ENCODE measurements at regions of chr18 and their contacts with region 1.

Region 1: DNA sequence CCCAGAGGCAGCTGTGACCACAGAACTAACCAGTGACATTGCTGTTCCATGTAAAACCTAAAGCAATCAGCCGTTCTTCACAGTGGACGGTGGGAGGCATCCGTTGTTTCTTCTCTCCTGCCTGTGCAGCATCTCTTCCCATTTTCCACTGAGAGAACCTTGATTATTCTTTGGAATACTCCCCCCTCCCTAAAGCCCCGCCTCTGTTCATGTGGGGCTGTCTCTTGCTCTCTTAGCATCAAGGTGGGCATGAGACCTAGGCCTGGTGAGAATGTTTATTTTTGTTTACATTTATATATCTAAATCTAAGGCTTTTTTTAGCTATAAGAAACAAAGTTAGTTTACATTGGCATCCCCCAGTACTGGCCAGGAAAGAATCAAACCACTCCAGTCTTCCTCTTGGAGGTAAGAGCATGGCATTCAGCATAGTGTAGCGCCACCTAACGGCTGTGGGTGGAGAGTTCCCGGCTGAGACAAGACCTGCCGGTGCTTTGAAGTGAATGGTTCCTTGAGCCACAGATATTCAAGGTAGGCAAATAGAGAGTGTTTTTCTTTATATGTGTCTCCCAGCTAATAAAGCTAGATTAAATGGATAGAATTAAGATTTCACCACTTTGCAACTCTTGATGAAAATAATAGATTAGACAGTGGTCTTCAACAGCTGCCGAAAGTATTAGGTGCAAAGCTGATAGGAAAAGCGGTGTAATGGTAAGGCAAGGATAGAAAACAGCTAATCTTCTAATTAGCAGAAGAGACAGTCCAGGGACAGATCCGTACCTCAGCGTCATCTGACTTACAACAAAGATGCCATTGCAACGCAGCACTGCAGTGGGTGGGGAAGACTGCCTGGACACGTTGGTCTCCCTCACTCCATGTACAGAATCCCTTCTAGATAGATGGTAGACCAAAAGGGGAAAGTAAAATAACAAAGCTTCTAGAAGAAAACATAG is 219.6 kb upstream of the RAB12 start:
- DNase-seq: no peak
- ATAC-seq: peak; percentile 83
- H3K4me3 ChIP-seq: no peak overlapping the region
- H3K27ac ChIP-seq: no peak overlapping the region
- H3K4me1 ChIP-seq: no peaks in the 10 kb centered on the region
- H3K27me3 ChIP-seq: no peaks in the 10 kb centered on the region
- CTCF ChIP-seq: peak; percentile 62 to 71 (median 66)
- EP300 ChIP-seq: no peak
- POLR2A ChIP-seq: no peak
- RAD21 ChIP-seq: peak; percentile 60

Region 2: DNA sequence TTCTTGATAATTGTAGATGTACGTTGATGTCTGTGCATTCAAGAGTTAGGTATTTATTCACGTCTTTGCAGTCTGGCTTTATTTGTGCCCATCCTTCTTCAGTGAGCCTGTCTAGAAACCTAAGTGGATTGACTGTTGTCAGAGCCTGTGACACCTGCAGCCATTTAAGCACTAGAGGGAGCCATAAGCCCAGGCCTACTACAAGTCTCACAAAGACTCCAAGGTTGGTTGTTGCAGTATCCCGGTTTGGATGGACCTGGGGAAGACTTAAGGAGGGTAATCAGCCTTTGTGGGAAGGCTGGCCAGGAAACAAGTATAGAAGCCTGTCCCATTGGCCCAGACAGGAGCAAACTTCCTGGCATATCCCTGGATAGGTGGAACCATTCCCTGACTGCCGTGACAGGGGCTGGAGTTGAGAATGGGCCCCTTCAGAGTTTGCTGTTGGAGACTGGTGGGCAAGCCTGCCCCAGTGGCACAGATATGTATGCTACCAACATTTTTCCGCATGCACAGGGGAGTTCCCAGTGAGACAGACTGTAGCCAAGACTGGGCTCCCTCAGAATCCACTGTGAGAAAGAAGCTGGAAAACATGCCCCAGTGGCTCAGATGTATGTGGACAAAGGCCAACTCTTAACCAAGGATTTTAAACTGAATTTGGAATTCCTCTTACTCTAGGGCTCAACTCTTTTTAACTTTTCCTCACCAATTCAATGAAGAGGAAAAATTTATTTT is 1168.1 kb before region 1 on chr18:
- CTCF ChIA-PET with region 1: interaction called, 6 read pairs
- POLR2A ChIA-PET with region 1: no interaction called
- RAD21 ChIA-PET with region 1: no interaction called
- SMC1A ChIA-PET with region 1: interaction called, 4 read pairs
- in situ Hi-C with region 1: loop called (anchors 25 kb)
- intact Hi-C with region 1: loop called (anchors 1 kb)
- DNase-seq: peak; percentile 4
- ATAC-seq: peak; percentile 89
- H3K4me3 ChIP-seq: no peak overlapping the region
- H3K27ac ChIP-seq: no peak overlapping the region
- H3K4me1 ChIP-seq: no peaks in the 10 kb centered on the region
- H3K27me3 ChIP-seq: no peaks in the 10 kb centered on the region
- CTCF ChIP-seq: peak; percentile 58 to 80 (median 73)
- EP300 ChIP-seq: no peak
- POLR2A ChIP-seq: no peak
- RAD21 ChIP-seq: peak; percentile 66

Region 3: DNA sequence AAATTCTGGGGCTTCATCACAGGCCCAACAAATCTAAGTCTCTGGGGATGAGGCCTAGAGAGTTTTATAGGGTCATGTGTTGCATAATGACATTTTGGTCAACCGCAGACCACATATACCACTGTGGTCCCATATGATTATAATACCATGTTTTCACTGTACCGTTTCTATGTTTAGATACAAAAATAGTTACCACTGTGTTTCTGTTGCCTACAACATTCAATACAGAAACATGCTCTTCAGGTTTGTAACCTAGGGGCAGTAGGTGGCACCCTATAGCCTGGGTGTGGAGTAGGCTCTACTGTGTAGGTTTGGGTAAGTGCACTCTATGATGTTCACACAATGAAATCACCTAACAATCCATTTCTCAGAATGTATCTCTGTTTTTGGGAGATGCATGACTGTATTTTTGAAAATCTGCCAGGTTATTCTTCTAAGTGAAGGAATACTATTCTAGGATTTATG is 337.4 kb before region 1 on chr18:
- CTCF ChIA-PET with region 1: interaction called, 18 read pairs
- POLR2A ChIA-PET with region 1: no interaction called
- RAD21 ChIA-PET with region 1: interaction called, 3 read pairs
- SMC1A ChIA-PET with region 1: interaction called, 5 read pairs
- in situ Hi-C with region 1: no loop called
- intact Hi-C with region 1: no loop called
- DNase-seq: no peak
- ATAC-seq: peak; percentile 85
- H3K4me3 ChIP-seq: no peak overlapping the region
- H3K27ac ChIP-seq: no peak overlapping the region
- H3K4me1 ChIP-seq: no peaks in the 10 kb centered on the region
- H3K27me3 ChIP-seq: no peaks in the 10 kb centered on the region
- CTCF ChIP-seq: peak in 1 of 3 experiments; percentile 17; a peak in 1 of 6 replicates
- EP300 ChIP-seq: no peak; a peak in 1 of 4 replicates
- POLR2A ChIP-seq: no peak
- RAD21 ChIP-seq: peak; percentile 29

Region 4: GRCh38 chr18:8084160-8084559 is 305.5 kb before region 1 on chr18:
- CTCF ChIA-PET with region 1: interaction called, 20 read pairs
- POLR2A ChIA-PET with region 1: no interaction called
- RAD21 ChIA-PET with region 1: interaction called, 4 read pairs
- SMC1A ChIA-PET with region 1: interaction called, 15 read pairs
- in situ Hi-C with region 1: no loop called
- intact Hi-C with region 1: no loop called
- DNase-seq: no peak
- ATAC-seq: peak; percentile 68
- H3K4me3 ChIP-seq: no peak overlapping the region
- H3K27ac ChIP-seq: no peak overlapping the region
- H3K4me1 ChIP-seq: no peaks in the 10 kb centered on the region
- H3K27me3 ChIP-seq: no peaks in the 10 kb centered on the region
- CTCF ChIP-seq: no peak
- EP300 ChIP-seq: no peak
- POLR2A ChIP-seq: no peak
- RAD21 ChIP-seq: no peak

Region 5: GRCh38 chr18:8400296-8400695 is 10.6 kb after region 1 on chr18:
- CTCF ChIA-PET with region 1: interaction called, 15 read pairs
- POLR2A ChIA-PET with region 1: no interaction called
- RAD21 ChIA-PET with region 1: no interaction called
- SMC1A ChIA-PET with region 1: no interaction called
- in situ Hi-C with region 1: no loop called
- intact Hi-C with region 1: no loop called
- DNase-seq: no peak
- ATAC-seq: no peak
- H3K4me3 ChIP-seq: no peak overlapping the region
- H3K27ac ChIP-seq: no peak overlapping the region
- H3K4me1 ChIP-seq: no peaks in the 10 kb centered on the region
- H3K27me3 ChIP-seq: no peaks in the 10 kb centered on the region; a peak in 1 of 4 replicates
- CTCF ChIP-seq: no peak
- EP300 ChIP-seq: no peak
- POLR2A ChIP-seq: no peak
- RAD21 ChIP-seq: no peak

Region 6: DNA sequence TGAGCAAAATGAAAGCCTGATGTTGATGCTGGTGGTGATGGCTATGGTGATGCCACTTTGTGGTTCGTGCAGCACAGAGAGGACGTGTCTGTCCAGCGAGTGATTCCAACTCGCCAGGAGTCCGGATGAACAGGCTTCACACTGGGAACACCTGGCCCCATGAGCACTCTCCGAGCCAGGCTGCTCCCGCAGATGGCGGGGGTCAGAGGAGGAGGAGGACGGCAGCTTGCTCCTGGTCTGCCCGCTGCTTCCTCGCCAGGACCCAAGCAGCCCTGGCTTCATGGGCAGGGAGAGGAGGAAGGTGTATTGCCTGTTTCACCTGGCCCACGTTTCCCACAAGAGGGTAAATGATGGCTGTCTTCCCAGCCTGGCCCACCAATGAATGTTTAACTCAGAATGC is 437.3 kb after region 1 on chr18:
- CTCF ChIA-PET with region 1: no interaction called
- POLR2A ChIA-PET with region 1: no interaction called
- RAD21 ChIA-PET with region 1: no interaction called
- SMC1A ChIA-PET with region 1: no interaction called
- in situ Hi-C with region 1: no loop called
- intact Hi-C with region 1: no loop called
- DNase-seq: no peak
- ATAC-seq: no peak
- H3K4me3 ChIP-seq: no peak overlapping the region
- H3K27ac ChIP-seq: no peak overlapping the region
- H3K4me1 ChIP-seq: no peaks in the 10 kb centered on the region
- H3K27me3 ChIP-seq: peaks cover 0 to 3% of the 10 kb centered on the region in 2 experiments; a peak in 3 of 4 replicates
- CTCF ChIP-seq: no peak
- EP300 ChIP-seq: no peak
- POLR2A ChIP-seq: no peak
- RAD21 ChIP-seq: no peak

Measured in GM12878 (cell line).